ENCODE measurements at regions of chr7 and their contacts with region 1.

Region 1: GRCh38 chr7:992709-993607 is 10.0 kb downstream of the CYP2W1 start:
- DNase-seq: peak; percentile 69 to 97
- ATAC-seq: peak; percentile 91 to 97
- H3K4me3 ChIP-seq: no peak overlapping the region
- H3K27ac ChIP-seq: peak overlapping the region in 1 of 2 experiments; percentile 50; a peak in 1 of 6 replicates
- H3K4me1 ChIP-seq: peaks cover 17% of the 10 kb centered on the region
- CTCF ChIP-seq: peak; percentile 99
- EP300 ChIP-seq: no peak
- POLR2A ChIP-seq: no peak
- RAD21 ChIP-seq: peak; percentile 93 to 97

Region 2: DNA sequence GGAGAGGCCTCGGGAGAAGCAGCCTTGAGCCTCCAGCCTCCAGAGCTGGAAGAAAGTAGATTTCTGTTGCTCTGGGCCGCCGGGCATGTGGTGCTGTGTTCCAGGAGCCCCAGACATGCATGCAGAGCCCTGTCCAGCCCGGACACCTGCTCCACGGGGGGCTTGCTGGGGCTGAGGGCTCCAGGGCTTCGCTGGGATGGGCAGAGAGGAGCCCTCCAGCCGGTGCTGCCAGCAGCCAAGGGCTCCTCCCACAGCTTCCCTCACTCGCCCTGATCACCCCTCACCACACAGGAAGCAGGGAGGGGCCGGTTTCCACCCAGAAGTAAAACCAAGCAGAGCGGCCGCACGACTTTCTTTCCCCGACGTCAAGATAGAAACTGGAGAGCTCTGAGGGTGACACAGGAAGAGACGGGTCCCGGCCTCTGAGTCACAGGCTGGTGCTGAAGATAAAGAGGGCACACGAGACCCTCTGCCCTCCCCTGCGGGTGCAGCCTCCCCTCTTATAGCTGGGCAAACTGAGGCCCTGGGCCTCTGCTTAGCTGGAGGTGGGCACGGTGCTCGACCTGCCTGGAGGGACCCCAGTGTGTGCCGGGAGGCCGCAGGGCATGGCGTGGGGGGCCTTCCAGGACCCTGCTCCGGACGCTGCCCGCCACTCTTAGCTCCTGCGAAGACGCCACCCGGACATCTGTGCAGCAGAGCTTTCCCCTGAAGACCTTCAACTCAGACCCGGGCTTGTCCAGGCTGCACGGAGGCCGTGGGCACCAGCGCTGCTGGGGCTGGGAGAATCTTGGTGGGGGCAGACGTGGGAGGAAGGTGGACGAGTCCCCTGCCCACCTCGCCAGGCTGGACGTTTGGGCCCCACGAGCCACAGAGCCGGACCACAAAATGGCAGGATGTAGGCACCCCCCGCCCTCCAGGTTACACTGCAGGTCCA is 69.6 kb before region 1 on chr7:
- CTCF ChIA-PET with region 1: interaction called, 13 read pairs
- POLR2A ChIA-PET with region 1: no interaction called
- DNase-seq: no peak
- ATAC-seq: peak in 1 of 2 experiments; percentile 30; a peak in 3 of 6 replicates
- H3K4me3 ChIP-seq: no peak overlapping the region
- H3K27ac ChIP-seq: 0 out of 6 replicates have a peak overlapping the region, but pooled peaks of 1 of the 2 experiments have one; percentile 11
- H3K4me1 ChIP-seq: peaks cover 5% of the 10 kb centered on the region; the same call in 2 of the 3 replicates
- CTCF ChIP-seq: no peak
- EP300 ChIP-seq: no peak
- POLR2A ChIP-seq: no peak
- RAD21 ChIP-seq: no peak

Region 3: GRCh38 chr7:1012004-1012715 is 19.2 kb after region 1 on chr7:
- CTCF ChIA-PET with region 1: interaction called, 138 read pairs
- POLR2A ChIA-PET with region 1: no interaction called
- DNase-seq: no peak
- ATAC-seq: peak in 1 of 2 experiments; percentile 10; a peak in 2 of 6 replicates
- H3K4me3 ChIP-seq: no peak overlapping the region
- H3K27ac ChIP-seq: no peak overlapping the region
- H3K4me1 ChIP-seq: no peaks in the 10 kb centered on the region
- CTCF ChIP-seq: no peak
- EP300 ChIP-seq: no peak
- POLR2A ChIP-seq: no peak
- RAD21 ChIP-seq: no peak

Region 4: GRCh38 chr7:1065263-1066260 is 72.6 kb after region 1 on chr7:
- CTCF ChIA-PET with region 1: interaction called, 487 read pairs
- POLR2A ChIA-PET with region 1: interaction called, 5 read pairs
- DNase-seq: peak; percentile 72 to 95
- ATAC-seq: peak; percentile 94 to 97
- H3K4me3 ChIP-seq: no peak overlapping the region
- H3K27ac ChIP-seq: no peak overlapping the region
- H3K4me1 ChIP-seq: peaks cover 4% of the 10 kb centered on the region; the same call in 1 of the 3 replicates
- CTCF ChIP-seq: peak; percentile 82
- EP300 ChIP-seq: no peak
- POLR2A ChIP-seq: no peak
- RAD21 ChIP-seq: peak; percentile 91 to 92

Region 5: DNA sequence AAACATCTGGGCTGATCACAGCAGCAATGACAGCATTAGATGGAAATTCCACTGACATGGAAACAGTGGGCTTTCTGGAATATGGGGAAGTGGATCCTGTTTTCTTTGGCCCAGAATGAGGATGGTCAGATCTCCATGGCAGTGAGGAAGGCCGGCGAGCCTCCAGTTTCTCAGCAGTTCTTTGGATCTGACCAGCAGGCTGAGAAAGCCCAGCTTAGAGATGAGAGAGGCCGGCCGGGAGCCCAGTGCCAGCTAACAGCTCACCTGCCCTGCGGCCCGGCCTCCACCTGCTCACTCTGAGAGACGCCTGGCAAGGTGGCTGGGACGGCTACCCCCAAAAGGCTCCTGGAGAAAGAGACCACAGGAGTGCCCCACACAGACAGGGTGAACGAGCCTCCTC is 119.2 kb after region 1 on chr7:
- CTCF ChIA-PET with region 1: interaction called, 13 read pairs
- POLR2A ChIA-PET with region 1: no interaction called
- DNase-seq: no peak
- ATAC-seq: no peak; a peak in 1 of 6 replicates
- H3K4me3 ChIP-seq: no peak overlapping the region
- H3K27ac ChIP-seq: no peak overlapping the region
- H3K4me1 ChIP-seq: no peaks in the 10 kb centered on the region
- CTCF ChIP-seq: no peak
- EP300 ChIP-seq: no peak
- POLR2A ChIP-seq: no peak
- RAD21 ChIP-seq: no peak

Region 6: GRCh38 chr7:1175967-1176851 is 183.3 kb after region 1 on chr7:
- CTCF ChIA-PET with region 1: interaction called, 84 read pairs
- POLR2A ChIA-PET with region 1: interaction called, 3 read pairs
- DNase-seq: peak; percentile 79 to 85
- ATAC-seq: peak; percentile 86 to 92
- H3K4me3 ChIP-seq: peak overlapping the region; percentile 34
- H3K27ac ChIP-seq: peak overlapping the region; percentile 78 to 87
- H3K4me1 ChIP-seq: peaks cover 11% of the 10 kb centered on the region; the same call in 2 of the 3 replicates
- CTCF ChIP-seq: peak; percentile 86
- EP300 ChIP-seq: no peak
- POLR2A ChIP-seq: 0 out of 2 replicates have a peak, but pooled peaks have one; percentile 23
- RAD21 ChIP-seq: peak; percentile 70 to 79

Measured in A549 (cell line).